PC-3 (cell line): ENCODE measurements at regions of chr3 and their contacts with region 1.

Region 1: DNA sequence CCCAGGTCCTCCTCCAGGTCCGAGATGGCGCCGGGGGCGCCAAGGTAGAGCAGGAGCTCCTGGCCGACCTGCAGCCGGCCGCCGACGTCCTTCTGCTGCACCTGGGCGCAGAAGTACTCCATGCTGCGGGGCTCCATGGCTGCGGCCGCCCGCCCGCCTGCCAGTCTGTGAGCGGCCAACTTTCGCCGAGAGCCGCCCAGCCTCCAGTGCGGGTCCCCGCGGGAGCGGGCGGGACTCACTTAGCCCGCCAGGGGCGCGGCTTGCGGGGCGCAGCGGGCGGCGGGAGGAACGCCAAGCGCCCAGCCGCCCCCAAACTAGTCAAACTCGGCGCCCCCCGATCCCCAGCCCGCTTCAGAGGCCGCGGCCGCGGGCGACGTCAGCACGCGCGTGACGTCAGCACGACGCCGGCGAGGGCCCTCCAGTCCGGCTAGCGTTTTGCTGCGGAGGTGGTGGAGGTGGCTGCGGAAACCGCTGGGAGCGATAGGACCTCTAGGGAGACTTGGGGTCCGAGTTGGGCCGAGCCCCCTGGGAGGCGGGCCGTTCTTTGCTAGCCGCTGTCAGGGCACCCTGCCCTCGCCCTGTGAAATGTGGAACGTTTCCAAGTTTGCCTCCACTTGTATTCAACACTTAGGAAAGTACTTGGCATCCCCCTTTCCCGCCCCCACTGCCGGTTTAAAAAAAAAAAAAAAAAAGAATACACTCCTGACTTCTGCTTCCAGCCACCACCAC is at the start of gene CLASP2:
- DNase-seq: peak; percentile 88
- ATAC-seq: peak; percentile 86
- H3K4me3 ChIP-seq: peak within 1 kb of the TSS; percentile 98
- H3K27ac ChIP-seq: peak within 1 kb of the TSS; percentile 64
- H3K4me1 ChIP-seq: peaks cover 12% of the 10 kb centered on the region
- H3K27me3 ChIP-seq: no peaks in the 10 kb centered on the region
- CTCF ChIP-seq: no peak
- total RNA-seq, gene CLASP2: 84.8 and 98.7 TPM in 2 replicates

Region 2: DNA sequence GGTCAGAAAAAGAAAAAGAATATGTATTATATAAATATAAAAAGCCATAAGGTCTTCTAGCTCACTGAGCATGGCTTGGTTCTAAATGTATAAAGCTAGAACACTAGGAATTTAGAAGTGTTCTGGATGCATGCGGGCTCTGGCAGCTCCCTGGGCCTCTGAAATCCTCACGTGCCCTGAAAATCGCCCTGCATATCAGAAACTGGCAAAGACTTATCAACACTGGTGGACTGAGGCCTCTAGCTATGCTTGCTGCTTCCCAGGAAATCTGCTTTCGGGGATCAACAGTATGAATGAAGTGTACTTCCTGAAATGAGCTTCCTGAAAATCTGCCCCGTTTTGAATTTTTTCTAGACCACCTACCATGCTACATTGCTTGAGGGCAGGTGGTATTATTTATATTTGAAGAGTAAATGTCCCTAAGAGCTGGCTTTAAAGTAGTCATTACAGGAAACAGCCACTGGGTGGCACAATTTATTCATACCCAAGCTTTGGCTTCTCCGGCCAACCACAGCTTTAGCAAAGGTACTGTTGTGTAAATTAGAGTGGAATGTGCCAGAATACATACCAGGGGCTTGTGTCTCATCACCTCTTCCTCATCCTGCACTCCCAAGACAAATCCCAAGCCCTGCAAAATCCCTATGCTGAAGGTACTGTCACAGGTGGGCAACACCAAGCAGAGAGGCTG is 586.6 kb before region 1 on chr3:
- CTCF ChIA-PET with region 1: no interaction called
- POLR2A ChIA-PET with region 1: no interaction called
- intact Hi-C with region 1: loop called (anchors 5 kb)
- DNase-seq: peak; percentile 85
- ATAC-seq: peak; percentile 83
- H3K4me3 ChIP-seq: no peak overlapping the region
- H3K27ac ChIP-seq: no peak overlapping the region
- H3K4me1 ChIP-seq: 0 out of 2 replicates have a peak, but pooled peaks cover 3% of the 10 kb centered on the region
- H3K27me3 ChIP-seq: no peaks in the 10 kb centered on the region
- CTCF ChIP-seq: peak; percentile 94

Region 3: DNA sequence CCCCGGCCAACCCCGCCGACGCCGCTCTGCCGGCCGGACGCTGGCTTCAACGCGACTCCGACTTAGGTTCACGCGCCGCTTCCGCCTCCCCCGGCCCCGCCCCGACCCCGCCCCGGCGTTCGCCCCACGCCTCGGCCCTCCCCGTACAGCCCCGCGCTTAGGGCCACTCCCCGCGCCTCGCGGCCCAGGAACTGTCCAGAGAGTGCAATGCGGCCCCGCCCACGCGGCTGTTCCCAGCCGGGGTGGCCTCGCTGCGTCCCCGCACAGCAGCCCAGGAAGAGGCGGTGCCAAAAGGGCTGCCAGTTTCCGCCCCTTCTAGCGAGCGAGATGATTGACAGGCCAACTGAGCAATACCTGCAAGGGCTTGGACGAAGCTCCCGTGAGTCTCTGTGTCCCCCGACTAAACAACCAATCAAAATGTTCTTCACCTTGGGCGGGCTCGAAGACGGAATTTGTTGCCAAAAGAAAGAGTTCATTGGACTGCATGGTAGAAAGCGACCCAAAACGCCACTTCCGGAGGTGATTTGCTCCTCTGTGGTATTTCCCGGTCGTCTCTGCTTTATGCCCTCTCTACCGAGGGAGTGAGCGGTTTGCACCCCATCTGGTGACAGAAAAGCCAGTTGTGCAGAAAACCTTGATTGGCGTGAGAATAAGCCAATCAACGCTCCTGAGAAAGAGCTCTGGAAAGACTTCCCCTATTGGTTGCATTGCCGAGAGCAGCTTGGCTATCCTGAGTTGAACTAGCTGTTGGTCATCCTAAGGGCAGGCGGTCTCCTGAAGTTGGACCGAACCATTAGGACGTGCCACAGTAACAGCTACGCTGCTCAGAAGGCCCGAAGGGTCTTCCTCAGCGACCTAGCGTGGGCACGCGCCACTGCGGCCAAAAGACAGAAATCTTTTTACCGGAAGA is 277.5 kb before region 1 on chr3 and contains the start of gene UBP1:
- CTCF ChIA-PET with region 1: no interaction called
- POLR2A ChIA-PET with region 1: no interaction called
- intact Hi-C with region 1: loop called (anchors 2 kb)
- DNase-seq: peak; percentile 100
- ATAC-seq: peak; percentile 89
- H3K4me3 ChIP-seq: peak within 1 kb of the TSS; percentile 84
- H3K27ac ChIP-seq: peak within 1 kb of the TSS; percentile 85
- H3K4me1 ChIP-seq: peaks cover 26% of the 10 kb centered on the region
- H3K27me3 ChIP-seq: no peaks in the 10 kb centered on the region
- CTCF ChIP-seq: no peak
- total RNA-seq, gene UBP1: 49.3 and 57.5 TPM in 2 replicates

Region 4: DNA sequence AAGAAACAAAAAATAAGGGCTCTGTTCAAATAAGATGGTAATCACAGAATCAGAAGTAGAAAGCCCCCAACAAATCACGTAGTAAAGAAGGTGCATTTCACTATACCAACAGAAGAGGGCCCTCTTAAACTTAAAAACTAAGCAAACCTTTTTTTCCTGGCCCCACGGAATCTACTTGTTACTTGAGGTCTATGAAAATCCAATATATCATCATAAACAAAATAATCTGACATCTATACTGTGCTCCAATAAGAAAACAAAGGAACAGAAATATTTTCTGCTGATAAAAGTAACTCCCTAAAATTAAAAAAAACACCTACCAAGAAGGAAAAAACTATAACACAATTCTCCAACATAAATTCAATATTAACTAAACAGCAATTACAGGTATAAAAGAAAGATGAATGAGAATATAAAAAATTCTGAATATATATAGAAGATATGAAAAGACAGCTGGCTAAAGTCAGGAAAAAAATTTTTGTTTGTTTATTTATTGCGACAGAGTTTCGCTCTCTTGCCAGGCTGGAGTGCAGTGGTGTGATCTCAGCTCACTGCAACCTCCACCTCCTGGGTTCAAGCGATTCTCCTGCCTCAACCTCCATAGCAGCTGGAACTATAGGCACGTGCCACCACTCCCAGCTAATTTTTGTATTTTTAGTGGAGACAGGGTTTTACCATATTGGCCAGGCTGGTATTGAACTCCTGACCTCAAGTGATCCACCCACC is 81.7 kb before region 1 on chr3:
- CTCF ChIA-PET with region 1: interaction called, 3 read pairs
- POLR2A ChIA-PET with region 1: no interaction called
- intact Hi-C with region 1: loop called (anchors 1 kb)
- DNase-seq: peak; percentile 76
- ATAC-seq: peak; percentile 63; the same call in 1 of the 2 replicates
- H3K4me3 ChIP-seq: no peak overlapping the region
- H3K27ac ChIP-seq: no peak overlapping the region
- H3K4me1 ChIP-seq: no peaks in the 10 kb centered on the region
- H3K27me3 ChIP-seq: no peaks in the 10 kb centered on the region
- CTCF ChIP-seq: peak; percentile 86

Region 5: GRCh38 chr3:33773637-33774036 is 55.6 kb after region 1 on chr3:
- CTCF ChIA-PET with region 1: no interaction called
- POLR2A ChIA-PET with region 1: no interaction called
- intact Hi-C with region 1: loop called (anchors 2 kb)
- DNase-seq: no peak
- ATAC-seq: no peak
- H3K4me3 ChIP-seq: no peak overlapping the region
- H3K27ac ChIP-seq: no peak overlapping the region
- H3K4me1 ChIP-seq: no peaks in the 10 kb centered on the region
- H3K27me3 ChIP-seq: no peaks in the 10 kb centered on the region
- CTCF ChIP-seq: no peak